Dorsolateral prefrontal cortex (tissue), 120 donors: ENCODE measurements at regions of chr11 and their contacts with region 1.

Region 1: GRCh38 chr11:47980245-47981049 is at the start of gene PTPRJ:
- DNase-seq: peak; percentile 42 to 84 (median 66)
- H3K4me3 ChIP-seq: peak within 1 kb of the TSS; percentile 66 to 96 (median 89)
- H3K27ac ChIP-seq: peak within 1 kb of the TSS; percentile 51 to 96 (median 90)
- H3K27me3 ChIP-seq: no peaks in the 10 kb centered on the region
- CTCF ChIP-seq: peak in 3 of 56 donors; percentile 4 to 11 (median 6)
- total RNA-seq, gene PTPRJ: 28.6 to 58.8 (median 37.2) TPM

Region 2: GRCh38 chr11:47847892-47848635 is 132.4 kb before region 1 on chr11 and contains the start of gene NUP160:
- intact Hi-C with region 1: no loop called
- DNase-seq: peak; percentile 77 to 93 (median 88)
- H3K4me3 ChIP-seq: peak within 1 kb of the TSS; percentile 59 to 100 (median 93)
- H3K27ac ChIP-seq: peak within 1 kb of the TSS; percentile 76 to 99 (median 94)
- H3K27me3 ChIP-seq: no peaks in the 10 kb centered on the region
- CTCF ChIP-seq: peak in 38 of 56 donors; percentile 9 to 57 (median 30)
- total RNA-seq, gene NUP160: 15.7 to 43.6 (median 27.8) TPM

Region 3: DNA sequence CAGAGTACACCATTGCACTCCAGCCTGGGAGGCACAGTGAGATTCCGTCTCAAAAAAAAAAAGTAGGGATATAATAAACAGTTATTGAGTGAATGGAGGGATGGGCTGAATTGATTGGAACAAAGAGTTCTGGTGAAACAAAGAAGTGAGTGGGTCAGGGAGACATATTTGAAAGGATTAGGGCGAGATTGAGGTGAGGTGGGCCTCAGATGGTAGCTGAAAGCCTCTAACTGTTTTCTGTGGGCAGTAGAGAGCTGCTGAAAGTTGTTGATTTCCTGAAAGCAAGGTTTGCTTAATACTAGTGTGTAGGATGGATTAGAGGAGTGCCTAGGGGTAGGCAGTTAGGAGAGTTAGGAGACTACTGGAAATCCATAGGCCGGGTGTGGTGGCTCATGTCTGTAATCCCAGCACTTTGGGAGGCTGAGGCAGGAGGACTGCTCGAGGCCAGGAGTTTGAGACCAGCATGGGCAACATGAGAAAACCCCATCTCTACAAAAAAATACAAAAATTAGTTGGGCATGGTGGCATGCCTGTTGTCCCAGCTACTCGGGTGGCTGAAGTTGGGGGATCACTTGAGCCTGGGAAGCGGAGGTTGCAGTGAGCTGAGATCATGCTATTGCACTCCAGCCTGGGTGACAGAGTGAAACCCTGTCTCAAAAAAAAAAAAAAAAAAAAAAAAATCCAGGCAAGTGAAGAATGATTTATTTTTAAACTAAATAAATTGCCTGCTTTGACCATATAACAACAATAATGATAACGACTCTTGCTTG is 41.5 kb before region 1 on chr11:
- intact Hi-C with region 1: loop called (anchors 5 kb)
- DNase-seq: no peak
- H3K4me3 ChIP-seq: no peak overlapping the region
- H3K27ac ChIP-seq: no peak overlapping the region
- H3K27me3 ChIP-seq: no peaks in the 10 kb centered on the region
- CTCF ChIP-seq: no peak

Region 4: GRCh38 chr11:48034926-48035871 is 54.8 kb after region 1 on chr11:
- intact Hi-C with region 1: loop called (anchors 2 to 5 kb)
- DNase-seq: peak in 7 of 10 donors; percentile 7 to 64 (median 52)
- H3K4me3 ChIP-seq: peak overlapping the region in 15 of 59 donors; percentile 1 to 35 (median 10)
- H3K27ac ChIP-seq: peak overlapping the region; percentile 43 to 98 (median 94)
- H3K27me3 ChIP-seq: no peaks in the 10 kb centered on the region
- CTCF ChIP-seq: peak in 3 of 56 donors; percentile 5 to 19 (median 16)

Region 5: GRCh38 chr11:48043111-48043990 is 62.9 kb after region 1 on chr11:
- intact Hi-C with region 1: loop called in 1 of 2 experiments (anchors 5 kb)
- DNase-seq: no peak
- H3K4me3 ChIP-seq: peak overlapping the region in 22 of 59 donors; percentile 2 to 50 (median 22)
- H3K27ac ChIP-seq: peak overlapping the region; percentile 68 to 99 (median 93)
- H3K27me3 ChIP-seq: no peaks in the 10 kb centered on the region
- CTCF ChIP-seq: no peak

Region 6: DNA sequence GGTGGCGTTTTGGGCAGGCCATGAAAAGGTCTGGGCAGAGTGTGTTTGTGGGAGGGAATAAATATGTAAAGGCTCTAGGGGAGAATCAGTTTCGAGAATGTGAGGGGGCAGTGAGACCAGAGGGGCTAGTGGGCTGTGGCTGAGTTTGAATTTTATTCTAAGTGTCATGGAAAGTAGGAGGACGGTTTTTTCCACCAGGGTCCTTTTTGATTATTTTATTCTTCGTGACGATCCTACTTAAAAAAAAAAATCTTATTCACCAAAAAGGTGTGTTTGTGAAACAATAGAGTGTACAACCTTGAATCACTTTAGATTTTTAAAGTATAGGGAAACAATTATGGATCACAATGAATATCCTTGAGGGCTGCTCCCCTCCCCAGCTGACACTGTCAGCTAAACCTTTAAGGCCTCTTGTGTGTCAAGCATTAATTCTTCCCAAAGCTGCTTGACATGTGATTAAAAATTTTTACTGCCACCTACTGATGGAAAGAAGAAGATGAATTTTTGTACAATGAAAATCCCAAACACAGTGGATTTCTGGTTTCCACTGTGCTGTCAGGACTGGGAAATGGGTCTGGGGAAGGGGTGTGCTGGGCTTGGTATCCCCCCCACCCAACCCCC is 128.7 kb after region 1 on chr11:
- intact Hi-C with region 1: loop called (anchors 2 kb)
- DNase-seq: no peak
- H3K4me3 ChIP-seq: peak overlapping the region in 56 of 59 donors; percentile 13 to 69 (median 48)
- H3K27ac ChIP-seq: peak overlapping the region in 58 of 59 donors; percentile 11 to 99 (median 80)
- H3K27me3 ChIP-seq: no peaks in the 10 kb centered on the region
- CTCF ChIP-seq: peak in 53 of 56 donors; percentile 29 to 69 (median 57)